CD8-positive, alpha-beta T cell (primary cell): ENCODE measurements at regions of chr1 and their contacts with region 1.

Region 1: DNA sequence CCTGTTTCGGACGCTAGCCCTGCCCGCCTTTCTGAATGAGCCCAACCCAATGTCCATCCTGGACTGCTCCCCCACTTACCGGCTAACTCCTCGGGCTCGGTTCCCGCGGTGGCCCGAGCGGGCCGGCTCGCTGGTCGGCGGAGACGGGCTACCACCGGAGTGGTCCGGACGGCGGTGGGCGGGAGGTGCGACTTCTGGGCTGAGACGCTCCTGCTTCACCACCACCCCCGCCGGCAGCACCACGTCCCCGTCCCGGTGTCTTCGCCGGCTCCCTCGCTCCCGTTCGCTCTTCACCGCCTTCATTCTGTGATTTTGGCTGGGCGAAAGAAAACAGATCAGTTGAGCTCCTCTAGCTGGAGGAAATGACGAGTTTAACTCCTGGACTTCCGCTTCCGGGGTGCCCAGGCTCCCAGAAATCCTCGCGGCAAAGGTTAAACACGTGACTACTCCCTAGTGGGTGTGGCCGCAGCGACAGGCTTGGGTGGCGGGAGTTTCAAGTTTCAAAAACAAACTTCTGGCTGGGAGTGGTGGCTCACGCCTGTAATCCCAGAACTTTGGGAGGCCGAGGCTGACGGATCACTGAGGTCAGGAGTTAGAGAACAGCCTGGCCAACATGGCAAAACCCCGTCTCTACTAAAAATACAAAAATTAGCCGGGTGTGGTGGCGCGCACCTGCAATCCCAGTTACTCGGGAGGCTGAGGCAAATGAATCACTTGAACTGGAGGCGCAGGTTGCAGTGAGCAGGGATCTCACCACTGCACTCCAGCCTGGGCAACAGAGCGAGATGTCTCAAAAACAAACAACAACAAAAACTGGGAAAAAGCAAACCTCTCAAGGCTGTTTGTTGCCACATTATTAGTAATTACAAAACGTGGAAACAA is at the start of gene SNIP1:
- DNase-seq: peak; percentile 84 to 96 (median 91)
- ATAC-seq: peak; percentile 95
- H3K4me3 ChIP-seq: peak within 1 kb of the TSS; percentile 88 to 97
- H3K4me3 Mint-ChIP-seq: peak within 1 kb of the TSS; percentile 100
- H3K27ac ChIP-seq: peak within 1 kb of the TSS; percentile 88 to 91
- H3K27ac Mint-ChIP-seq: peak within 1 kb of the TSS; percentile 100
- H3K4me1 ChIP-seq: peaks cover 24% of the 10 kb centered on the region
- H3K4me1 Mint-ChIP-seq: peaks cover 43% of the 10 kb centered on the region
- H3K27me3 ChIP-seq: no peaks in the 10 kb centered on the region
- H3K27me3 Mint-ChIP-seq: peaks cover 2% of the 10 kb centered on the region
- CTCF ChIP-seq: no peak
- total RNA-seq, gene SNIP1: 71.7 to 84.2 TPM

Region 2: GRCh38 chr1:37519613-37520012 is 34.6 kb before region 1 on chr1:
- CTCF ChIA-PET with region 1: interaction called, 7 read pairs
- POLR2A ChIA-PET with region 1: interaction called, 10 read pairs
- intact Hi-C with region 1: loop called (anchors 1 kb)
- DNase-seq: peak in 3 of 9 experiments; percentile 30 to 70 (median 43)
- ATAC-seq: peak; percentile 52
- H3K4me3 ChIP-seq: peak overlapping the region; percentile 65 to 68
- H3K4me3 Mint-ChIP-seq: peak overlapping the region; percentile 99
- H3K27ac ChIP-seq: peak overlapping the region; percentile 48 to 53
- H3K27ac Mint-ChIP-seq: peak overlapping the region; percentile 94
- H3K4me1 ChIP-seq: peaks cover 9% of the 10 kb centered on the region
- H3K4me1 Mint-ChIP-seq: peaks cover 33% of the 10 kb centered on the region
- H3K27me3 ChIP-seq: no peaks in the 10 kb centered on the region
- H3K27me3 Mint-ChIP-seq: no peaks in the 10 kb centered on the region
- CTCF ChIP-seq: no peak

Region 3: GRCh38 chr1:37595440-37596319 is 41.5 kb after region 1 on chr1 and contains the start of gene GNL2:
- CTCF ChIA-PET with region 1: no interaction called
- POLR2A ChIA-PET with region 1: no interaction called
- intact Hi-C with region 1: loop called (anchors 1 kb)
- DNase-seq: peak; percentile 92 to 99 (median 96)
- ATAC-seq: peak; percentile 95
- H3K4me3 ChIP-seq: peak within 1 kb of the TSS; percentile 67 to 88
- H3K4me3 Mint-ChIP-seq: peak within 1 kb of the TSS; percentile 100
- H3K27ac ChIP-seq: peak within 1 kb of the TSS; percentile 68 to 93
- H3K27ac Mint-ChIP-seq: peak within 1 kb of the TSS; percentile 99
- H3K4me1 ChIP-seq: peaks cover 23% of the 10 kb centered on the region
- H3K4me1 Mint-ChIP-seq: peaks cover 36% of the 10 kb centered on the region
- H3K27me3 ChIP-seq: no peaks in the 10 kb centered on the region
- H3K27me3 Mint-ChIP-seq: no peaks in the 10 kb centered on the region
- CTCF ChIP-seq: no peak
- total RNA-seq, gene GNL2: 54.6 to 55.2 TPM